Motor neuron (in vitro differentiated cells): ENCODE measurements at regions of chr14 and their contacts with region 1.

Region 1: GRCh38 chr14:57486767-57487379 is 6.8 kb downstream of the CCDC198 start:
- ATAC-seq: peak; percentile 32 to 67 (median 60)
- H3K4me3 ChIP-seq: no peak overlapping the region
- H3K27ac ChIP-seq: no peak overlapping the region
- H3K4me1 ChIP-seq: peaks cover 18 to 24% of the 10 kb centered on the region in 2 donors

Region 2: GRCh38 chr14:57362361-57362760 is 124.5 kb before region 1 on chr14:
- in situ Hi-C with region 1: no loop called
- ATAC-seq: no peak
- H3K4me3 ChIP-seq: no peak overlapping the region
- H3K27ac ChIP-seq: no peak overlapping the region
- H3K4me1 ChIP-seq: no peaks in the 10 kb centered on the region

Region 3: DNA sequence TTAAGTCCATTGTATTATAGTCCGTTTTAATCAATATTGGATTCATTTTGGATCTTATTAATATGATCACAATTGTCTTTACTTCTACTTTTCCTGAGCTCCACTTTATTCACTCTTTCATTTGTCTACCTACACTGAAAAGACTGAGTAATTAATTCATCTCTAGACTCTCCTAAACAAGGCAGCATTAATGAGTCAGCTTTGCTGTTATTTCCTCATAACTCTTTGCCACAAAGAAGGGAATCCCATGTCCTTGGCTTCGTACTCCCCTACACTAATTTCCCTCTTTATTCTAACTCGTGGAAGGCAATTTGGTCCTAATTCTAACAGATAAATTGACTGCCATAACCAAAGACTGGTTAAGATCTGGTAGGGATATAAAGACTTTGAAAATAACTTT is 573.2 kb after region 1 on chr14:
- in situ Hi-C with region 1: loop called in 5 of 9 experiments (anchors 10 to 25 kb)
- ATAC-seq: peak in 3 of 8 experiments; percentile 46 to 57 (median 52)
- H3K4me3 ChIP-seq: no peak overlapping the region
- H3K27ac ChIP-seq: no peak overlapping the region
- H3K4me1 ChIP-seq: peaks cover 2 to 15% of the 10 kb centered on the region in 2 donors

Region 4: GRCh38 chr14:58072288-58073071 is 585.6 kb after region 1 on chr14:
- in situ Hi-C with region 1: loop called in 5 of 9 experiments (anchors 10 to 25 kb)
- ATAC-seq: peak; percentile 62 to 89 (median 82)
- H3K4me3 ChIP-seq: no peak overlapping the region
- H3K27ac ChIP-seq: no peak overlapping the region
- H3K4me1 ChIP-seq: no peaks in the 10 kb centered on the region